Esophagus squamous epithelium (tissue), 5 donors: ENCODE measurements at regions of chrX and their contacts with region 1.

Region 1: DNA sequence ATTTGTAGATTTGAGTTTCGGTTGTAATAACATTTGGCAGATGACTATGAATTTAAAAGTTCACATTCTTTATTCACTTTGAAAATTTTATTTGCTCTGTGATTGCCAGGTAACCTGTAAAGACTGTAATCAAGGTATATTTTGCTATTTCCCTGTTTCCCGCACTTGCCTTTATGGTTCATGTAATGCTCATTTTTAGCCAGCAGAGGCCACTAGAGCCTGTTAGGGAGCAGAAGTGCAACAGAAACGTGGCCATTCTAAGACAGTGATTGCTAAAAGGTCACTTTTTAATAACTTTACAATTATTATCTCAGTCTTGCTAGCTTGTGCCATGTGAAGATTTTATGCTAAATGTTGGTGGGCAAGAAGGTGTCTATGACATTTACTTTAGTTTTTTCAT is 12.4 kb downstream of the YIPF6 start:
- DNase-seq: no peak
- H3K4me3 ChIP-seq: no peak overlapping the region
- H3K27ac ChIP-seq: no peak overlapping the region
- H3K4me1 ChIP-seq: no peaks in the 10 kb centered on the region
- H3K27me3 ChIP-seq: no peaks in the 10 kb centered on the region
- CTCF ChIP-seq: peak; percentile 40 to 79 (median 70)
- POLR2A ChIP-seq: no peak

Region 2: GRCh38 chrX:68710870-68711576 is 199.8 kb after region 1 on chrX:
- intact Hi-C with region 1: loop called (anchors 10 kb)
- DNase-seq: no peak
- H3K4me3 ChIP-seq: no peak overlapping the region
- H3K27ac ChIP-seq: no peak overlapping the region
- H3K4me1 ChIP-seq: no peaks in the 10 kb centered on the region
- H3K27me3 ChIP-seq: no peaks in the 10 kb centered on the region
- CTCF ChIP-seq: peak in 5 of 6 experiments; percentile 32 to 58 (median 42)
- POLR2A ChIP-seq: no peak